ENCODE measurements at regions of chr2 and their contacts with region 1.

Region 1: GRCh38 chr2:40451918-40452605 is at the start of gene SLC8A1:
- DNase-seq: peak; percentile 68
- H3K4me3 ChIP-seq: peak within 1 kb of the TSS; percentile 57 to 67 (median 65)
- H3K27ac ChIP-seq: peak within 1 kb of the TSS; percentile 86 to 96 (median 92)
- H3K4me1 ChIP-seq: peaks cover 0 to 53% (median 24%) of the 10 kb centered on the region in 4 donors
- H3K27me3 ChIP-seq: no peaks in the 10 kb centered on the region
- CTCF ChIP-seq: no peak
- EP300 ChIP-seq: no peak
- POLR2A ChIP-seq: peak in 1 of 2 donors; percentile 16
- total RNA-seq, gene SLC8A1: 229 to 337 (median 302) TPM

Region 2: DNA sequence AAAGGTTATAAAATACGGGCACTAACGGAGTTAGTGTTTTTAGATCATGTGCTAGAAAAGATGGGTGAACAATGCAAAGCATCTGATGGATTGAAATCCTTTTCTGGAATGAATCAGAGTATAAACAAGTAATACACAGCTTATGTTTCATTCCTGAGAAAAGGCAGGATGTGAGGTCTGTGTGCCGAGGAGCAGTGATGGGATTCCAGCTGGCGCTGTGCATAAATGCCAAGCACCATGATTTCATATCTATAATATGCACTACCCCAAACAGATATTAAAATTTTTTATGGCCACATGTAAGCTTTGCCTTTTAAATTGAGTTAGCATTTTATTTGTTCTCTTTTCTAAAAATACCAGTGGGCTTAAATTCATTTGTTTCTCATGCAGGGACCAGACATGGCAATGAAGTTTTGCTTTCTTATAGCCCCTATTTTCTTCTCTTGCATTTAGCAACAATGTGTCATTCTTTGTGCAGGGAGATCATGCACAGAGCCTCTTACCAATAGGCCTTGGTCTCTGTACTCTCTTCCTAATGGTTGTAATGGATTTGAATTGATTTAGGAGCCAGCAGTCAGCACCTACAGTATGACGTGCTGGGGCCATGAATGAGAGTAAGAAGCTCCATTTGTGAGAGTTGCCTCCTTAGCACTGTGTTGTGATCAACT is 324.0 kb before region 1 on chr2:
- intact Hi-C with region 1: loop called (anchors 10 kb)
- DNase-seq: no peak
- H3K4me3 ChIP-seq: no peak overlapping the region
- H3K27ac ChIP-seq: peak overlapping the region in 3 of 4 donors; percentile 61 to 83 (median 77)
- H3K4me1 ChIP-seq: peaks cover 0 to 79% (median 60%) of the 10 kb centered on the region in 4 donors
- H3K27me3 ChIP-seq: no peaks in the 10 kb centered on the region
- CTCF ChIP-seq: no peak
- EP300 ChIP-seq: no peak
- POLR2A ChIP-seq: no peak

Region 3: GRCh38 chr2:40281021-40281940 is 170.8 kb before region 1 on chr2:
- intact Hi-C with region 1: loop called (anchors 5 kb)
- DNase-seq: peak; percentile 76
- H3K4me3 ChIP-seq: no peak overlapping the region
- H3K27ac ChIP-seq: peak overlapping the region; percentile 73 to 85 (median 82)
- H3K4me1 ChIP-seq: peaks cover 0 to 83% (median 57%) of the 10 kb centered on the region in 4 donors
- H3K27me3 ChIP-seq: no peaks in the 10 kb centered on the region
- CTCF ChIP-seq: no peak
- EP300 ChIP-seq: peak in 1 of 4 donors; percentile 41
- POLR2A ChIP-seq: no peak

Region 4: GRCh38 chr2:40367652-40368051 is 84.4 kb before region 1 on chr2:
- intact Hi-C with region 1: loop called (anchors 5 kb)
- DNase-seq: no peak
- H3K4me3 ChIP-seq: no peak overlapping the region
- H3K27ac ChIP-seq: peak overlapping the region in 2 of 4 donors; percentile 75 to 84
- H3K4me1 ChIP-seq: peaks cover 0 to 62% (median 45%) of the 10 kb centered on the region in 4 donors
- H3K27me3 ChIP-seq: no peaks in the 10 kb centered on the region
- CTCF ChIP-seq: no peak
- EP300 ChIP-seq: no peak
- POLR2A ChIP-seq: no peak

Measured in sigmoid colon (tissue), 7 donors.